ENCODE measurements at regions of chr21 and their contacts with region 1.

Region 1: GRCh38 chr21:39022863-39023693 is 160.2 kb downstream of the PSMG1 start:
- DNase-seq: peak in 1 of 2 donors; percentile 87
- H3K4me3 ChIP-seq: peak overlapping the region in 1 of 2 donors; percentile 6
- H3K27ac ChIP-seq: peak overlapping the region; percentile 79 to 84
- H3K4me1 ChIP-seq: peaks cover 17 to 33% of the 10 kb centered on the region in 2 donors
- H3K27me3 ChIP-seq: no peaks in the 10 kb centered on the region
- CTCF ChIP-seq: peak in 2 of 3 experiments; percentile 16 to 45

Region 2: GRCh38 chr21:38920631-38921398 is 102.3 kb before region 1 on chr21:
- intact Hi-C with region 1: loop called (anchors 5 kb)
- DNase-seq: no peak
- H3K4me3 ChIP-seq: no peak overlapping the region
- H3K27ac ChIP-seq: peak overlapping the region; percentile 79 to 80
- H3K4me1 ChIP-seq: peaks cover 10 to 39% of the 10 kb centered on the region in 2 donors
- H3K27me3 ChIP-seq: no peaks in the 10 kb centered on the region
- CTCF ChIP-seq: no peak

Region 3: GRCh38 chr21:38985568-38986378 is 37.3 kb before region 1 on chr21:
- intact Hi-C with region 1: loop called (anchors 5 kb)
- DNase-seq: peak; percentile 39 to 88
- H3K4me3 ChIP-seq: peak overlapping the region in 1 of 2 donors; percentile 20
- H3K27ac ChIP-seq: peak overlapping the region; percentile 70 to 76
- H3K4me1 ChIP-seq: peaks cover 25 to 55% of the 10 kb centered on the region in 2 donors
- H3K27me3 ChIP-seq: no peaks in the 10 kb centered on the region
- CTCF ChIP-seq: no peak

Region 4: DNA sequence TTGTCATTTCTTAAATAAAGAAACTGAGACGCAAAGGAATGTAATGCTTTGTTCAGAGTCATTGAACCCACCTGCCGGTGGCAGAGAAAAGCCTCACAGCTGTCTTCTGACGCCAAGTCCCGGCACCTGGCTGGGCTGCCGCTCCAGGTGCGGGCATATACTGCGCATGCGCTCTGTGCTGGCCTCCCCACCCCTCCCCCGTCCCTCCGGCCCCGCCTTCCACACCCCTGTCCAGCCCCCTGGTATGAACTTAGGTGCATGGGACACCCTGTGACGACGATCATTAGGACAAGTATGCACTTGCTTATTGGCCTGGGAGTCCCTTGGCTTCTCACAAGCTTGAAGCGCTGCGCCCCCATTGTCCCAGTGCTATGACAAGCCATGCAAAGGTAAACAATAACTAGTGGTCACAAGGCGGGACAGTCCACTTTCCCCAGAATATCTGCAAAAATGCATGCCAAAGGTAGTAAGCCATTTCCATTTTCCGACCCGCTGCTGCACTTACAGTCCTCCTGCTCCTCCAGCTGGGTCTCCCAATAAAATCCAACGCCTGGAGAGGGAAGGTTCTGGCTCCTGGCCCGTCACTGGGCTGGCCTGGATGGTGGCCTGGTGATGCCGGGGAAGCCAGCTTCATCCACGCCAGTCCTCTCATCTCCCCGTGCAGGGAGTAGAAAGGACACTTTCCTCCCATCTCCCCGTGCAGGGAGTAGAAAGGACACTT is 59.7 kb after region 1 on chr21:
- intact Hi-C with region 1: loop called (anchors 2 kb)
- DNase-seq: peak in 1 of 2 donors; percentile 71
- H3K4me3 ChIP-seq: peak overlapping the region; percentile 4 to 34
- H3K27ac ChIP-seq: peak overlapping the region; percentile 27 to 54
- H3K4me1 ChIP-seq: peaks cover 12 to 24% of the 10 kb centered on the region in 2 donors
- H3K27me3 ChIP-seq: no peaks in the 10 kb centered on the region
- CTCF ChIP-seq: no peak

Region 5: GRCh38 chr21:39105341-39105765 is 82.3 kb after region 1 on chr21:
- intact Hi-C with region 1: loop called (anchors 5 kb)
- DNase-seq: peak in 1 of 2 donors; percentile 56
- H3K4me3 ChIP-seq: no peak overlapping the region
- H3K27ac ChIP-seq: peak overlapping the region; percentile 32 to 69
- H3K4me1 ChIP-seq: peaks cover 0 to 15% of the 10 kb centered on the region in 2 donors
- H3K27me3 ChIP-seq: no peaks in the 10 kb centered on the region
- CTCF ChIP-seq: no peak

Region 6: GRCh38 chr21:39161064-39161463 is 138.0 kb after region 1 on chr21:
- intact Hi-C with region 1: no loop called
- DNase-seq: no peak
- H3K4me3 ChIP-seq: no peak overlapping the region
- H3K27ac ChIP-seq: no peak overlapping the region
- H3K4me1 ChIP-seq: peaks cover 3 to 10% of the 10 kb centered on the region in 2 donors
- H3K27me3 ChIP-seq: no peaks in the 10 kb centered on the region
- CTCF ChIP-seq: no peak